ENCODE measurements at regions of chr3 and their contacts with region 1.

Region 1: DNA sequence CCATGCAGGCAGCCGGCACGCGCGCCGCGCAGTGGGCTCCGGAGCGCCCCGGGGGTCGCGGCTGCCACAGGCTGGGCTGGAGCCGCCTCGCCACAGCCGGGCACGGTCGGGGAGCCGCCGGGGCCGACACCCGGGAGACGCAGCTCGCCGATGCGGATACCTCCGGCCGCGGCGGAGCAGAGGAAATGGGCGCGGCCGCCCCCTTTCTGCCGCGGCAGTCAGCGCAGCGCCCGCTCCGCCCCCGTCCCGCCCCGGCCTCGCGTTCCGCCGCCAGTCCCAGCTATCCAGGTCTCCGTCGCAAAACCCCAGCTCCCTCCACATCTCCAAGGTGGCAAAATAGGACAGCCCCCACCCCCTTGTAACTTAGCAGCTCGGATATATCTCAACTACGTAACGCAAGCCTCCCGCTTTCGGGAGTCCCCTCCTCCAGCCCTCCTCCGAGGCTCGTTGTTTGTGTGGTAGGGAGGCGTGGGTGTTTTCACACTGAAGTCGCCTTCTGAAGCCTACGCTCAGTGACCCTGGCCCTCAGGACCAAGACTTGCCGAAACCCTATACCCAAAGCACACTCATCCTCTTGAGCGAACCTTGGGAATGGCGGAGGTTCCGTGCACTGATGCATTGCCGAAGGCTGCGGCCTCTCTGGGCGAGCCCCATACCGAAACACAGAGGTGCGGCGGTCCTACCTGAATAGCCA is at the start of gene SH3BP5:
- DNase-seq: peak; percentile 82
- H3K4me3 Mint-ChIP-seq: peak within 1 kb of the TSS; percentile 83
- H3K27ac Mint-ChIP-seq: peak within 1 kb of the TSS; percentile 78
- H3K4me1 Mint-ChIP-seq: peaks cover 54% of the 10 kb centered on the region
- H3K27me3 Mint-ChIP-seq: no peaks in the 10 kb centered on the region
- total RNA-seq, gene SH3BP5: 33.6 to 37.5 TPM

Region 2: DNA sequence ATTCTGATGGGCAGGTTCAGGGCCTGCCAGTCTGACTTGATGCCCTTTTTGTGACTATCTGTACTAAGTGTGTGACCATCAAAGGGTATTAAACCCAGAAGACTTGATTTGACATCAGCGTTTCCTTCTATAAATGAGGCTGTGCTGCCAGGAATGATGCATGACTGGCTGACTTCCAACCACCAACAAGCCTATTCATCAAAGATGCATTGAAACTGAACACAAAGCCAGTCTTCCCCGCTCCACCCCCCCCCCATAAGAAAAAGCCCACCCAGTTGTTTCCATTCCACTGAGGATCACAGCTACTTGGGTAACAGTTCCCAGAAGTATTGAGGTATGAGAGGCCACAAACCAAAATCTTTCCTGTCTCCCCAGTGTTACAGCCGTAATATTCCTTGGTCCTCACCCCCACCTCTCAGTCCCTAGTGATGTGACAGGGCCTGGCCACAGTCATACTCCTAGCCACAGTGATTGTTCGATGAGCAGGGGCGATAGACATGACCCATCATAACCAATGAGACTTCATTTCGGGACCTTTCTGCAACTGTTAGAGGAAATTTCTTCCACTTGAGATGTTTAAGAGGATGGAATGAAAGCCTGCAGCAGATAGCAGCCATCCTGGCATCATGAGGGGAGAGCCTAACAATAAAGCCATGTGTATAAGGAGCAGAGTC is 22.8 kb before region 1 on chr3:
- CTCF ChIA-PET with region 1: interaction called, 9 read pairs
- POLR2A ChIA-PET with region 1: interaction called, 10 read pairs
- intact Hi-C with region 1: loop called (anchors 1 kb)
- DNase-seq: peak; percentile 82
- H3K4me3 Mint-ChIP-seq: peak overlapping the region; percentile 61
- H3K27ac Mint-ChIP-seq: peak overlapping the region; percentile 98
- H3K4me1 Mint-ChIP-seq: peaks cover 78% of the 10 kb centered on the region
- H3K27me3 Mint-ChIP-seq: no peaks in the 10 kb centered on the region

Region 3: DNA sequence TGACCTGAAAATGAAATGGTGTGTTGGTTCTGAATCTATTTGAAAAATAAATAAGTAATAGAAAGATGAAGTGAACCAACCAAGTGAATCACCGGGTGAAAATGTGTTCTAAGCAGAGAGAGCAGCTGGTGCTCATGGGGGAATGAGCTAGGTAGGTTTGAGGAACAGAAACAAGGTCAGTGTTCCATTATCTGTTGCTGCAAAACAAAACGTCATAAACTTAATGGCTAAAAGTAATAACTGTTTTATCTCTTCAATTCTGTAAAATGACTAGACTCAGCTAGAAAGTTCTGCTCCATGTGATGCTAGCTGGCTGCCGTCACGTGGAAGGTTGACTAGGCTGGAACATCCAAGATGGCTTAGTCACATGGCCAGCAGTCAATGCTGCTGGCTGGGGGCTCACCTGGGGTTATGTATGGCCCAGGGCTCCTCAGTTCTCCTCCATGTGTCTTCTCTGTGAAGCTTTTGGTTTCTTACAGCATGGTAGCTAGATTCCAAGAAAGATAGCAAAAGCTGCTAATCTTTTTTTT is 13.1 kb after region 1 on chr3:
- CTCF ChIA-PET with region 1: interaction called, 19 read pairs
- POLR2A ChIA-PET with region 1: interaction called, 3 read pairs
- intact Hi-C with region 1: no loop called
- DNase-seq: no peak
- H3K4me3 Mint-ChIP-seq: no peak overlapping the region
- H3K27ac Mint-ChIP-seq: no peak overlapping the region
- H3K4me1 Mint-ChIP-seq: peaks cover 54% of the 10 kb centered on the region
- H3K27me3 Mint-ChIP-seq: no peaks in the 10 kb centered on the region

Region 4: GRCh38 chr3:15361494-15362212 is 29.1 kb after region 1 on chr3:
- CTCF ChIA-PET with region 1: interaction called, 15 read pairs
- POLR2A ChIA-PET with region 1: interaction called, 15 read pairs
- intact Hi-C with region 1: loop called (anchors 1 kb)
- DNase-seq: peak; percentile 85
- H3K4me3 Mint-ChIP-seq: peak overlapping the region; percentile 48
- H3K27ac Mint-ChIP-seq: peak overlapping the region; percentile 85
- H3K4me1 Mint-ChIP-seq: peaks cover 54% of the 10 kb centered on the region
- H3K27me3 Mint-ChIP-seq: no peaks in the 10 kb centered on the region

Region 5: DNA sequence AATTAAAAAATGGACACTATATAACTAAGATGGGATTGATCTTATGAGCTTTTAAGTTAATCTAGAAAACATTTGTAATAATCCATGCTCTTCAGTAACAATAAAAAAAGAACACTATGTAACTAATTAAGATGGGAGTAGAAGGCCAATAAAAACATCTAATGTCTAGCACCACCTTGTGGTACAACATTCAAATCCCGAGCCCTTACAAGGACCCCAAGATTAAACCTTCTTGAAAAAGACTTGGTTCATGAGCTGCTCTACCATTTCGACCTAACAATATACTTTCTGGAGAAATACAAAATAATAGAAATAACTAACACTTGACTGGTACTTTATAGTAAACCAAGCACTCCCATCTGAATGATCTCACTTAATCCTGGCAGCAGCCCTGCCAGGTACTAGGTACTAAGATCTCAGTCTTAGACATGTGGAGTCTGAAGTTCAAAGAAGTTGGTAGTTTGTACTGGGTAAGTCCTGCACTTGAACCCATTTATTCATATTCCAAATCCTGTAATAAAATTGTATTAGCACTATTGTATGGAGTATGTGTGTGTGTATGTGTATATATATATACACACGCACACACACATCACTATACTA is 73.0 kb after region 1 on chr3:
- CTCF ChIA-PET with region 1: interaction called, 12 read pairs
- POLR2A ChIA-PET with region 1: no interaction called
- intact Hi-C with region 1: no loop called
- DNase-seq: no peak
- H3K4me3 Mint-ChIP-seq: no peak overlapping the region
- H3K27ac Mint-ChIP-seq: no peak overlapping the region
- H3K4me1 Mint-ChIP-seq: peaks cover 3% of the 10 kb centered on the region
- H3K27me3 Mint-ChIP-seq: no peaks in the 10 kb centered on the region